Heart right ventricle (tissue), 16 donors: ENCODE measurements at regions of chr2 and their contacts with region 1.

Region 1: GRCh38 chr2:221716426-221717303 is 144.6 kb upstream of the EPHA4 start:
- DNase-seq: no peak
- ATAC-seq: no peak
- H3K4me3 ChIP-seq: no peak overlapping the region
- H3K27ac ChIP-seq: no peak overlapping the region
- H3K4me1 ChIP-seq: no peaks in the 10 kb centered on the region
- H3K27me3 ChIP-seq: peaks cover 0 to 16% (median 10%) of the 10 kb centered on the region in 7 donors
- CTCF ChIP-seq: no peak

Region 2: GRCh38 chr2:219886615-219887014 is 1830.0 kb before region 1 on chr2:
- intact Hi-C with region 1: loop called in 1 of 10 experiments (anchors 10 kb)
- DNase-seq: no peak
- ATAC-seq: no peak
- H3K4me3 ChIP-seq: no peak overlapping the region
- H3K27ac ChIP-seq: no peak overlapping the region
- H3K4me1 ChIP-seq: no peaks in the 10 kb centered on the region
- H3K27me3 ChIP-seq: peaks cover 0 to 10% (median 0%) of the 10 kb centered on the region in 7 donors
- CTCF ChIP-seq: no peak